ENCODE measurements at regions of chr20 and their contacts with region 1.

Region 1: GRCh38 chr20:37007898-37008649 is 56.6 kb upstream of the SAMHD1 start:
- DNase-seq: no peak
- H3K4me3 ChIP-seq: no peak overlapping the region
- H3K27ac ChIP-seq: peak overlapping the region in 3 of 59 donors; percentile 3 to 35 (median 17)
- H3K27me3 ChIP-seq: no peaks in the 10 kb centered on the region
- CTCF ChIP-seq: peak in 6 of 56 donors; percentile 12 to 36 (median 18)

Region 2: GRCh38 chr20:36773597-36774390 is 234.3 kb before region 1 on chr20 and contains the start of gene DSN1:
- intact Hi-C with region 1: no loop called
- DNase-seq: peak; percentile 87 to 94 (median 91)
- H3K4me3 ChIP-seq: peak within 1 kb of the TSS; percentile 57 to 100 (median 84)
- H3K27ac ChIP-seq: peak within 1 kb of the TSS; percentile 36 to 97 (median 91)
- H3K27me3 ChIP-seq: no peaks in the 10 kb centered on the region
- CTCF ChIP-seq: peak in 27 of 56 donors; percentile 1 to 65 (median 45)
- total RNA-seq, gene DSN1: 4.1 to 15.2 (median 8.6) TPM

Region 3: DNA sequence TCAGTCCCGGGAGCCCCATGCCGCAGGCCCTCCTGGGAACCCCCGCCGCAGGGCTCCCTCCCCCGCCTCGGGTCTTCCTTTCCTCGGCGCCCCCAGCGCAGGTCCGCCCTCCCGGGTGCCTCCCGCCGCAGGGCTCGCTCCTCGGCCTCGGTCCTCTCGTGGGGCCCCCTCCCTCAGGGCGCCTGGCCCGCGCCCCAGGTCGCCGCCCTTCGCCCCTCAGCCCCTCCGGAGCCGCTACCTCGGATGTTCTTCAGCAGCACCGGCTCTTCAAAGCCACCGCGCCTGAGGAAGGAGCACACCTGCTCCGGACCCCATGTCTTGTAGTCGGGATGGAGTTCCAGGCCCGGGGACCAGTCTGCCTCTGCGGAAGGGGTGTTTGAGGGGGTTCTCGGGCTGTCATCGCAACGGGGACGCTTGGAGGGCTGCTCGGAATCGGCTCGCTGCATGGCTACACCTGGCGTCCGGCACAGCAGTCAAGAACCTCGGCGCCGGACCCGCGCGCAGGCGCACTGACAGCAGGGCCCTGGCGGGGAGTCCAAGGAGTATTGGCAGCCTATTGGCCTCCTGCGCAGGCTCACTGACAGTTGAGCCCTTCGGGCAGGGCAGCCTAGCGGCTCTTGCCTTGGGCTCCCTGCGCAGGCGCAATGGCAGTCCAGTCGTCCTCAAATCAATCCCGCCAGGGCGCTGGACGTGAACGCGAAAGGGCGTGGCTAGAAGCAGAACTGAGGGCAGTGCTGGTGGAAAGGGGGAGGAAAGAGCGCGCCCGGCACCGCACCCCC is 56.7 kb before region 1 on chr20 and contains the start of gene SAMHD1:
- intact Hi-C with region 1: loop called in 1 of 2 experiments (anchors 2 kb)
- DNase-seq: peak; percentile 95 to 98 (median 96)
- H3K4me3 ChIP-seq: peak within 1 kb of the TSS; percentile 74 to 99 (median 95)
- H3K27ac ChIP-seq: peak within 1 kb of the TSS; percentile 30 to 94 (median 84)
- H3K27me3 ChIP-seq: no peaks in the 10 kb centered on the region
- CTCF ChIP-seq: peak in 42 of 56 donors; percentile 7 to 62 (median 32)
- total RNA-seq, gene SAMHD1: 27.8 to 103 (median 50.8) TPM

Region 4: DNA sequence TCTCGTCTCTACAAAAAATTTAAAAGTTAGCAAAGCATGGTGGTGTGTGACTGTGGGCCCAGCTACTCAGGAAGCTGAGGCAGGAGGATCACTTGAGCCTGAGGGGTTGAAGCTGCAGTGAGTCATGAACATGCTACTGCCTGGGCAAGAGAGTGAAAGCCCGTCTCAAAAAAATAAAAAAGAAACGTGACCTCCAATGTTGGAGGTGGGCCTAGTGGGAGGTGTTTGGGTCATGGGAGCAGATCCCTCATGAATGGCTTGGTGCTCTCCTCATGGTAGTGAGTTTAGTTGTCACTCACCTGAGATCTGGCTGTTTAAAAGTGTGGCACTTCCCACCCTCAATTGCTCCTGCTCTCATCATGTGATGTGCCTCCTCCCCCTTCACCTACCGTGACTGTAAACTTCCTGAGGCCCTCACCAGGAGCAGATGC is 63.4 kb after region 1 on chr20:
- intact Hi-C with region 1: no loop called
- DNase-seq: no peak
- H3K4me3 ChIP-seq: no peak overlapping the region
- H3K27ac ChIP-seq: no peak overlapping the region
- H3K27me3 ChIP-seq: no peaks in the 10 kb centered on the region
- CTCF ChIP-seq: no peak

Measured in dorsolateral prefrontal cortex (tissue), 120 donors.